ENCODE measurements at regions of chr6 and their contacts with region 1.

Region 1: DNA sequence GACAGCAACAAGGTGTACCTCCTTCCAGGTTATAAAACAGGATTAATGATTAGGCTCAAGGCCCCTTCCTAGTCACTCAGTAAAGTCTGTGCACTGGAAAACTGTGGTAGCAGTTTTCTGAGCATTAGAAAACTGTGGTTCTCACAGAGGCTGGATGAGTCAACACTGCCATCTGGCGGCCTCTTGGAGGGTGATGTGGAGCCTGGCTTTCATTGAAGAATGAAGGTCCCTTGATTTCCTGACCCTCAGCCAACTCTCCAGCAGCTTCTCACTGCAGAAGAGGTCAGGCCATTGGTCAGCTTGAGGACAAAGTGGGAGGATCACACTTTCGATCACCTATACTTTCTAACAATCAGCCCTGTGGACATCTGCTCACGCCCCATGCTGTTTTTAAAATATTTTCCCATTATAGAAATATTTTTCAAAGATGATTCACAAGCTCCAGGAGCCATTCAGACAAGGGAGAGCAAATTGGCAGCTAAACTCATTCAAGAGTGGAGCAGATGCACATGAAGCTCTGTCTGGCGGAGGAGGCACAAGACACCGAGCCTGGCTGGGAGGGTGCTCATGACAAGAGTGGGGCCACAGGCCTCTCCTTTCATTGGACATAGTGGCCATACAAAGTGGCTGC is 23.2 kb downstream of the PSMB1 start:
- DNase-seq: peak; percentile 74 to 80 (median 77)
- ATAC-seq: peak; percentile 45 to 86 (median 86)
- H3K4me3 ChIP-seq: no peak overlapping the region
- H3K27ac ChIP-seq: peak overlapping the region in 1 of 12 donors; percentile 34
- H3K4me1 ChIP-seq: peaks cover 0 to 4% (median 0%) of the 10 kb centered on the region in 12 donors
- H3K27me3 ChIP-seq: no peaks in the 10 kb centered on the region
- CTCF ChIP-seq: peak; percentile 79 to 93 (median 86)
- POLR2A ChIP-seq: no peak

Region 2: GRCh38 chr6:168895102-168895812 is 1634.7 kb before region 1 on chr6:
- intact Hi-C with region 1: loop called in 1 of 10 experiments (anchors 10 kb)
- DNase-seq: peak; percentile 65 to 87 (median 70)
- ATAC-seq: peak; percentile 55 to 93 (median 82)
- H3K4me3 ChIP-seq: peak overlapping the region in 6 of 12 donors; percentile 18 to 32 (median 25)
- H3K27ac ChIP-seq: no peak overlapping the region
- H3K4me1 ChIP-seq: peaks cover 0 to 4% (median 0%) of the 10 kb centered on the region in 12 donors
- H3K27me3 ChIP-seq: peaks cover 0 to 3% (median 0%) of the 10 kb centered on the region in 9 donors
- CTCF ChIP-seq: peak; percentile 83 to 95 (median 88)
- POLR2A ChIP-seq: no peak

Region 3: DNA sequence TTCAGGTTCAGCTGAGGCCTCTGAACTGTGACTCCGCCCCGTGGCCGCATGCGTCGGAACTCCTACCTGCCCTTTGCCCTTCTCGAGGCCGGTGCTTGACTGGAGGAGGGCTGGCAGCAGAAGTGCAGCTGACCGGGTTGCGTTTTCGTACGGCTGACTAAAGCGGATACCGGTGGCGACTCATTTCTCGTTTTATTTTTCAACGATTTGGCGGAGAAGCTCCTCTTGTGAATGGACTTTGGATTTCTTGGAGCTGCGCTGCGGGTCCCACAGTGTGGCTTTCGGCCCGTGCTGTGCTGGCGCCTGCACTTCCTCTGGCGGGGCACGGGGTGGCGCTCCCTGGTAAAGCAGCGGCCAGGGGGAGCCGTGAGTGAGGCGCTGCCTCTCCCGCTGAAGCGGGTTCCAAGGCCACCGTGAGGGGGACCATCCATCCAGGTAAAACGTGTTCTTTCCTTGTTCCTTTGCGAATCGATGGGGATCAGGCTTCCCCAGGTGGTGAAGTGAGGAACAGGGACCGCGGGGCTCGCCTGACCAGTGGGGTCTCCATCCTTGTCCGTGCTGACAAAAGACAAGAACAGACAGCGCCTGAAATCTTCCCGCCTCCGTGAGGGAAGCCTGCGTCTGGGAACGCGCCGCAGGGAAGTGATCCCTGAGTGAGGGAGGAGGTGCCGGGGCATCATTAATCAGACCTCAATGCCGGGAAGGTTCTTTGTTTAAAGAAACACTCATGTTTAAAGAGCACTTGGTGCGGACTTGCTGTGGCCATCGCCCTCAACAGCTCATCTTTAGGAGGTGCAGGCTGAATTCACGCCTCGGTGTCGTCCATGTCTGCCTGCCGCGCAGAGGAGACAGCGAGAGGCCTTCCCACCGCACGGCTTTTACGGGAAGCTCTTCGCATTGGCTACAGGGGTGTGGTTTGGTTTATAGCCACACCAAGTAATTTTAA is 739.7 kb before region 1 on chr6:
- intact Hi-C with region 1: loop called (anchors 2 to 5 kb)
- DNase-seq: peak; percentile 68 to 89 (median 71)
- ATAC-seq: peak; percentile 88 to 98 (median 96)
- H3K4me3 ChIP-seq: peak overlapping the region in 11 of 12 donors; percentile 14 to 63 (median 49)
- H3K27ac ChIP-seq: peak overlapping the region in 9 of 12 donors; percentile 10 to 82 (median 54)
- H3K4me1 ChIP-seq: peaks cover 0 to 18% (median 13%) of the 10 kb centered on the region in 12 donors
- H3K27me3 ChIP-seq: peaks cover 0 to 13% (median 0%) of the 10 kb centered on the region in 9 donors
- CTCF ChIP-seq: peak; percentile 87 to 98 (median 96)
- POLR2A ChIP-seq: no peak

Region 4: DNA sequence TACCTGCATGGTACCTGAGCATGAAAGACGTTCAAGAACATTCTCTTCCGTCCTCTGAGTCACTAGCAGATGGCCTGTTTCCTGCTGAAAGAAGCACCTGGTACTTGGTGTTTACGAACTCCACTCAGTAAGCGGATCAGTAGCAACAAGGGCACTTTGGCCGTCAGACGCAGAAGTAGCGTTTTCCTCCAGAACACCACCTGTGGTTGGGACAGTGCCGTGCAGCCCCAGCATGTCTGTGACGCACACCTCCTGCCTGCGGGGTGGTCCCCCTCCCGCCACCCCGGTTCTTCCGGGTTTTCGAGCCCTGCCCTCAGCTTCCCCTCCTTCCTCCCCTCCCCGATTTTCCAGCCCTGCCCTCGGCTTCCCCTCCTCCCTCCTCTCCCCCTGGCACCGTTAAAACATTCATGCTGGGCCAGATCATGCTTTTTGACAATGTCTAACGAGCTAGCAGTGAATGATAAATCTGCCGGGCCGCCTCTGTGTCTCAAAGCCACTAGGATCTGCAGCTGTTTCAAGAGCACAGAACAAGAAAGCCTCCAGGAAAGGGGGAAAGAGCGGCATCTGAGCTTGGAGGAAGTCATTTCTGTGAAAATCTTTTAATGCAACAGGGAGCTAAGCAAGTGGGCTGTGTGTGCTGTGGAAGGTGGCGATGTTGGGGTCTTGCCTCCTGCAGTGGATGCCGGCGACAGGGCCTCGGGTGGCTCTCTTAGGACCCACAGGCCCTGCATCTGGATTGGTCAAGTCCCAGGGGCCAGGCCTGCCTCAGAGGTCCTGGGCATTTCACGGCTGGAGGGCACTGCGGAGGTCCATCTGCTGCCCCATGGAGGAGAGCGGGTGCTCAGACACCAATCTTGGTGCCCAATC is 570.6 kb before region 1 on chr6:
- intact Hi-C with region 1: loop called in 4 of 10 experiments (anchors 5 to 10 kb)
- DNase-seq: peak in 1 of 5 donors; percentile 27
- ATAC-seq: peak in 2 of 4 donors; percentile 28 to 53
- H3K4me3 ChIP-seq: no peak overlapping the region
- H3K27ac ChIP-seq: no peak overlapping the region
- H3K4me1 ChIP-seq: peaks cover 0 to 15% (median 2%) of the 10 kb centered on the region in 12 donors
- H3K27me3 ChIP-seq: peaks cover 0 to 14% (median 0%) of the 10 kb centered on the region in 9 donors
- CTCF ChIP-seq: peak in 1 of 12 donors; percentile 6
- POLR2A ChIP-seq: no peak

Region 5: DNA sequence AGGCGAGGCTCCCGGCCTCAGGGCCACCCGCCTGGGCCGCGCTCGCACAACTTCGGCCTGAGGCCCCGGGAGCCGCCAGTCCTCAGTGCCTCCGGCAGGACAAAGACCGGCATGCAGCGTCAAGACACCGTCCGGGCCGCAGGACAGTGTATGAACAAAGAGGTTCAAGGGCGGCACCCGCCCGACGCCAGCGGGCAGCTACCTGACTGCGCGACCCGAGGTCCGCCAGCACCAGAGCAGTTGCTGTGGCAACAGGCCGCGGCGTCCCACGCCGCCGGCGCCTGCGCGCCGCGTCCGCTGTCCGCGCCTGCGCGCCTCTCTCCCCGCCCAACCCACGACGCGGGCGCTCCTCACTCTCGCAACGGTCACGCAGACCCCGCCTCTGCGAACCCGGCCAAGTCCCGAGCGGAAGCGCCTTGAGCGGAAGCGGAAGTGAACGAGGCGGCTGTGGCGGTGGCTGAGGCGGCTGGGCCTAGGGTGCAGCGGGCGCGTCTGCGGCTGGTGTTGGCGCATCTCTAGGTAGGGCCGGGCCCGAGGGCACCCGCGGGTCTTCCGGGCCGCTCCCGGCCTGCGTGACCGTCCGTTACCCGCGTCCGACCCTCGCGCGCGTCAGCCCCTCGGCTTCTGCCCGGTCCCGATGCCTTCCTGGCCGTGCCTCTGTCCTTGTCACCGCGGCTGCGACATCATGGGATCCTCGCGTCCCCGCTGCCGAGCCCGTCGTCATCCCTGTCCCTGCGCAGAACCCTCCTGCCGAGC is 223.5 kb before region 1 on chr6 and contains the start of gene FAM120B:
- intact Hi-C with region 1: loop called in 4 of 10 experiments (anchors 10 kb)
- DNase-seq: peak; percentile 97 to 99 (median 98)
- ATAC-seq: peak; percentile 98 to 99 (median 99)
- H3K4me3 ChIP-seq: peak within 1 kb of the TSS; percentile 77 to 99 (median 94)
- H3K27ac ChIP-seq: peak within 1 kb of the TSS; percentile 79 to 96 (median 92)
- H3K4me1 ChIP-seq: peaks cover 5 to 50% (median 35%) of the 10 kb centered on the region in 12 donors
- H3K27me3 ChIP-seq: no peaks in the 10 kb centered on the region
- CTCF ChIP-seq: no peak
- POLR2A ChIP-seq: peak; percentile 32 to 95
- total RNA-seq, gene FAM120B: 12.1 to 29.4 (median 19.9) TPM

Region 6: GRCh38 chr6:170316071-170316470 is 213.9 kb before region 1 on chr6:
- intact Hi-C with region 1: loop called in 1 of 10 experiments (anchors 10 kb)
- DNase-seq: no peak
- ATAC-seq: no peak
- H3K4me3 ChIP-seq: no peak overlapping the region
- H3K27ac ChIP-seq: no peak overlapping the region
- H3K4me1 ChIP-seq: peaks cover 0 to 54% (median 21%) of the 10 kb centered on the region in 12 donors
- H3K27me3 ChIP-seq: no peaks in the 10 kb centered on the region
- CTCF ChIP-seq: no peak
- POLR2A ChIP-seq: no peak

Measured in heart left ventricle (tissue), 16 donors.